ENCODE measurements at regions of chr17 and their contacts with region 1.

Region 1: GRCh38 chr17:82292251-82293154 is 19.0 kb upstream of the CSNK1D start:
- DNase-seq: peak; percentile 95 to 96 (median 95)
- H3K4me3 ChIP-seq: peak overlapping the region; percentile 62
- H3K27ac ChIP-seq: peak overlapping the region; percentile 97 to 99
- H3K4me1 ChIP-seq: peaks cover 17% of the 10 kb centered on the region
- H3K27me3 ChIP-seq: no peaks in the 10 kb centered on the region
- CTCF ChIP-seq: no peak
- EP300 ChIP-seq: peak; percentile 18
- POLR2A ChIP-seq: peak; percentile 96

Region 2: DNA sequence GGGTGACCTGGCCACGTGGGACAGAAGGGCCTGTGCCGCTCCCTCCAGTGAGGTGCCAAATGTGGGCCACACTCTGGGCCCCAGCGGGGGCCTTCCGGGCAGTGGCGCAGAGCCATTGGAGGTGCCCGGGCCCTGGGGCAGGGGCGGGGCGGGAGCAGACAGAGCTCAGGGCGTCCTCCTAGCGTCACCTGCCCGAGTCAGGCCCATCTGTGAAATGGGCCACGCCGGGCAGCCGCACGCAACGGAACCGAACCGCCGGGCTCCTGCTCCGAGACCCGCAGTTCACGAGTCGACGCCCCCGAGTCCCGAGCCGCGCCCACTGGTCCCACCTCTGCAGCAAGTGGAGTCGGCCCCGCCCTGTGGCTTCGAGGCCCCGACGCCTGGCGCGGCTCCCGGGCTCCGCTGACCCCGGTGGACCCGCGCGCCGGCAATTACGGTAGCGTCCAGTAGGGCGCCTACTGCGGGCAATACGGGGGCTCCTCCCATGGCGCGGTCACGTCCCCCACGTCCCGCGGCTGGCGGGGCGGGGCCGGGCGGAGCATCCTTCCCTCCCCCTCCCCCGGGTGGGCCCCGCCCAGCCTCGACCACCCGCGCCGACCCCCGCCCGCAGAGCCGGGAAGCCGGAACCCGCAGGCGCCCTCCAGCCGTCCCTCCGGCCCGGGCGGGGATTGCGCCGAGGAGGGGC is 61.7 kb before region 1 on chr17:
- intact Hi-C with region 1: loop called in 1 of 4 experiments (anchors 10 kb)
- DNase-seq: peak; percentile 83 to 92 (median 90)
- H3K4me3 ChIP-seq: peak overlapping the region; percentile 50
- H3K27ac ChIP-seq: peak overlapping the region; percentile 53 to 80
- H3K4me1 ChIP-seq: peaks cover 16% of the 10 kb centered on the region
- H3K27me3 ChIP-seq: no peaks in the 10 kb centered on the region
- CTCF ChIP-seq: peak; percentile 38 to 81 (median 64)
- EP300 ChIP-seq: no peak
- POLR2A ChIP-seq: no peak